Activated T-helper 1 cell treated with anti-CD3 and anti-CD28 coated beads, Interleukin-12 subunit alpha, Interleukin-12 subunit beta, Interleukin-2, Interleukin-4 antibody, amounts not matched to agents 30 ng/mL and 10 ng/mL and 1 ng/mL, durations not matched to agents 14 hours and 24 hours and 36 hours (primary cell): ENCODE measurements at regions of chr12 and their contacts with region 1.

Region 1: GRCh38 chr12:52023182-52023975 is 16.6 kb downstream of the TAMALIN start:
- DNase-seq: peak; percentile 85
- H3K4me3 Mint-ChIP-seq: peak overlapping the region; percentile 86
- H3K27ac Mint-ChIP-seq: peak overlapping the region; percentile 99
- H3K4me1 Mint-ChIP-seq: peaks cover 45% of the 10 kb centered on the region
- H3K27me3 Mint-ChIP-seq: peaks cover 14% of the 10 kb centered on the region

Region 2: GRCh38 chr12:51823875-51824565 is 199.4 kb before region 1 on chr12:
- intact Hi-C with region 1: loop called (anchors 5 kb)
- DNase-seq: no peak
- H3K4me3 Mint-ChIP-seq: no peak overlapping the region
- H3K27ac Mint-ChIP-seq: no peak overlapping the region
- H3K4me1 Mint-ChIP-seq: peaks cover 22% of the 10 kb centered on the region
- H3K27me3 Mint-ChIP-seq: peaks cover 33% of the 10 kb centered on the region

Region 3: DNA sequence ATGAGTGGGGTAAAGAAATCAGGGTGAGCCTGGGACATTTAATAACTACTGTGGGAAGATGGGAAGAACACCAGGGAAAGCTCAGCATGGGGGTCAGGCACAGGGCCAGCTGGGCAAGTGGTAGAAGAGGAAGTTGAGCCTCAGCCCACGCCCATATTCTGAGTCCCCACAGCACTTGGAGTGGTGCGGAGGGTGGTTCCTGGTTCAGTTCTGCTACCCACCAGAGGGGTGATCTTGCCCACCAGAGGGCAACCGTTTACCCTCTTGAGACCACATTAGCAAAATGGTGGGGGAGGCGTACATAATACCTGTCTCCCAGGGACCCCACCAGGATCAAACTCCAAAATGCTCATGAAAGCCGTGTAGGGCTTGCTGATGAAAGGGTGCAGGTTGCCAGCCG is 152.3 kb before region 1 on chr12:
- intact Hi-C with region 1: no loop called
- DNase-seq: no peak
- H3K4me3 Mint-ChIP-seq: no peak overlapping the region
- H3K27ac Mint-ChIP-seq: no peak overlapping the region
- H3K4me1 Mint-ChIP-seq: peaks cover 12% of the 10 kb centered on the region
- H3K27me3 Mint-ChIP-seq: peaks cover 55% of the 10 kb centered on the region

Region 4: GRCh38 chr12:51951199-51951842 is 72.1 kb before region 1 on chr12 and contains the start of gene ACVR1B:
- intact Hi-C with region 1: loop called (anchors 1 kb)
- DNase-seq: peak; percentile 83
- H3K4me3 Mint-ChIP-seq: peak within 1 kb of the TSS; percentile 89
- H3K27ac Mint-ChIP-seq: peak within 1 kb of the TSS; percentile 67
- H3K4me1 Mint-ChIP-seq: peaks cover 51% of the 10 kb centered on the region
- H3K27me3 Mint-ChIP-seq: peaks cover 40% of the 10 kb centered on the region
- total RNA-seq, gene ACVR1B: 11.4 and 12.0 TPM in 2 replicates

Region 5: GRCh38 chr12:51994959-51995358 is 28.4 kb before region 1 on chr12:
- intact Hi-C with region 1: loop called (anchors 1 kb)
- DNase-seq: no peak
- H3K4me3 Mint-ChIP-seq: no peak overlapping the region
- H3K27ac Mint-ChIP-seq: no peak overlapping the region
- H3K4me1 Mint-ChIP-seq: peaks cover 14% of the 10 kb centered on the region
- H3K27me3 Mint-ChIP-seq: no peaks in the 10 kb centered on the region

Region 6: DNA sequence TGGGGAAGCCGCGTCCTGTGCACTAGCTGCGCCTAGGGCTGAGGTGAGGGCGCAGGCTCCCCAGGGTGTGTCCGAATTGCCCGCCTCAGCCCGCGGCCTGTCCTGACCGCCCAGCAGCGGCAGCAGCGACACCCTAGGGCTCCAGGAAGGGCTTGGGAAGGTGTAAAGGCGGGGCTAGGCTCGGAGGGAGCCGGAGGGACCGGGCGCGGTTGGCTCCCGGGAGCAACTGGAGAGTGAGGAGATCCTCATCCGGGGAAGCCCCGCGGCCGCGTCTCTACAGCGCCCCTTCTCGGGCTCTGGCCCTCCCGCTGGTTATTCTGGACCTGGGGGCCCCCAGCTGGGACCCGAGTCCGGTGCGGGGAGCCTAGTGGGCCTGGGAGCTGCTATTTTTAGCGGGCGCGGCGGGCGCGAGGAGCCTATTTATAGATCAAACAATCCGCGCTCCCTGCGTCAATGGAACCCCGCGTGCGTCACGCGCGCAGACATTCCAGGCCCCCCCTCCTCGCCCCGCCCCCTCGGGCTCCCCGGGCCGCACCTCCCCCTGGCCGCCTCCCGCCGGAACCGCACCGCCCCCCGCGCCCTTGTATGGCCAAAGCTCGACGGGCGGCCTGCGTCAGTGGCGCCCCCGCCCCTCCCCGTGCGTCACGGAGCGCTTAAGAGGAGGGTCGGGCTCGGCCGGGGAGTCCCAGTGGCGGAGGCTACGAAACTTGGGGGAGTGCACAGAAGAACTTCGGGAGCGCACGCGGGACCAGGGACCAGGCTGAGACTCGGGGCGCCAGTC is 27.6 kb after region 1 on chr12 and contains the start of gene NR4A1:
- intact Hi-C with region 1: loop called (anchors 1 kb)
- DNase-seq: peak; percentile 96
- H3K4me3 Mint-ChIP-seq: peak within 1 kb of the TSS; percentile 96
- H3K27ac Mint-ChIP-seq: peak within 1 kb of the TSS; percentile 92
- H3K4me1 Mint-ChIP-seq: peaks cover 42% of the 10 kb centered on the region
- H3K27me3 Mint-ChIP-seq: no peaks in the 10 kb centered on the region
- total RNA-seq, gene NR4A1: 52.7 and 60.3 TPM in 2 replicates

Region 7: GRCh38 chr12:52082988-52083637 is 59.7 kb after region 1 on chr12:
- intact Hi-C with region 1: loop called (anchors 1 kb)
- DNase-seq: peak; percentile 35
- H3K4me3 Mint-ChIP-seq: no peak overlapping the region
- H3K27ac Mint-ChIP-seq: no peak overlapping the region
- H3K4me1 Mint-ChIP-seq: no peaks in the 10 kb centered on the region
- H3K27me3 Mint-ChIP-seq: peaks cover 16% of the 10 kb centered on the region

Region 8: GRCh38 chr12:52895061-52895887 is 871.9 kb after region 1 on chr12:
- intact Hi-C with region 1: no loop called
- DNase-seq: no peak
- H3K4me3 Mint-ChIP-seq: no peak overlapping the region
- H3K27ac Mint-ChIP-seq: no peak overlapping the region
- H3K4me1 Mint-ChIP-seq: no peaks in the 10 kb centered on the region
- H3K27me3 Mint-ChIP-seq: peaks cover 4% of the 10 kb centered on the region